ENCODE measurements at regions of chr6 and their contacts with region 1.

Region 1: GRCh38 chr6:81752138-81752920 is at the start of gene TENT5A:
- DNase-seq: peak; percentile 75
- ATAC-seq: peak; percentile 79
- H3K4me3 ChIP-seq: peak within 1 kb of the TSS; percentile 84 to 87
- H3K27ac ChIP-seq: peak within 1 kb of the TSS; percentile 82
- H3K4me1 ChIP-seq: peaks cover 4 to 24% of the 10 kb centered on the region in 2 experiments; a peak in 2 of 4 replicates
- H3K27me3 ChIP-seq: no peaks in the 10 kb centered on the region
- CTCF ChIP-seq: no peak
- POLR2A ChIP-seq: peak; percentile 45
- RAD21 ChIP-seq: peak; percentile 2
- total RNA-seq, gene TENT5A: 11.2 TPM

Region 2: DNA sequence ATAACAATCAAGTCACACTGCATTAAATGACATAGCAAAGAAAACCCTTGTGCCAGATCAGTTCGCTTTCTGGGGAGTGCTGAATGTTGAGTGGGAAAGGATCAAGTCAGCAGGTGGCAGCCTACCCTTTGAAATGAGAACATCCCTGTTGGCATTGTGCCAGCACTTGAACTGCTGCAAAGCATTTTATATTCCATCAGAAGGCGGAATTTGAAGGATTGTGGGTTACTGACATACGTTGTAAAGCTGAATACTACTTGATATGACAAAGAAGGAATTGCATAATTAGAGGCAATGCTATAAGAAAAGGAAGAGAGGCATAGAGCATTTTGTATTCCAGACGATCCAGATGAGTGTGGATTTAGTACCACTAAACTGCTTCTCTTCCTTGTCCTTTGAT is 1619.3 kb before region 1 on chr6:
- CTCF ChIA-PET with region 1: no interaction called
- POLR2A ChIA-PET with region 1: no interaction called
- RAD21 ChIA-PET with region 1: no interaction called
- intact Hi-C with region 1: loop called (anchors 5 kb)
- DNase-seq: peak; percentile 47
- ATAC-seq: peak; percentile 51; the same call in 1 of the 2 replicates
- H3K4me3 ChIP-seq: no peak overlapping the region
- H3K27ac ChIP-seq: no peak overlapping the region
- H3K4me1 ChIP-seq: peaks cover 6 to 9% of the 10 kb centered on the region in 2 experiments
- H3K27me3 ChIP-seq: no peaks in the 10 kb centered on the region
- CTCF ChIP-seq: peak; percentile 28 to 64 (median 54); a peak in 4 of 6 replicates
- POLR2A ChIP-seq: no peak
- RAD21 ChIP-seq: peak; percentile 84

Region 3: DNA sequence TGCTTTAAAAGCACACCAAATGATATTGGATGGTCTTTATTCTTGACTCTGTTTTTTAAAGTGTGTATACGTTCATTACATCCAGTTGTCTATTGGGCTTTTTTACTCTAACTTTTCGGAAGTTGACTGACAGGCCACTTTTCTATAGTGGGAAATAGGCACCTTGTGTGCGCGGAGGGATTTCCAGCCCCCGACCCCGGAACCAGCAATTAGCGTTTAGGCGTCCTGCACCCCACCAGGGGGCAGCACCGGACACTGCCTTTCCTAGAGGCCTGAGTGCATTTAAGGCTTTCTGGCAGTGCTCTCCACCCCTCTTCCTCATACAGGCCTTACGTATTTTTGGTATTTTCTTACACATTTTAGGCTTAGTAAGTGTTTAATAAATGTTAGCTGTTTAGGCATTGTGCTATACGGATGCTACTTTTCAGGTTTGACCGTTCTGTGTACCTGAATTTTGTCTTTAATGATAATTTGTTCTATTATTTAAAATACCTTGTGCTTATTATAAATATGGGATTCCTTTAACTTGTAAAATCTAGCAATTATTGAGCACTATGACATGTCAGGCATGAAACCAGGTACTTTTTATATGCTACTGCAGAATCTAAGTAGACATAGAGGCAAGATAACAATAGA is 1414.0 kb before region 1 on chr6:
- CTCF ChIA-PET with region 1: no interaction called
- POLR2A ChIA-PET with region 1: no interaction called
- RAD21 ChIA-PET with region 1: no interaction called
- intact Hi-C with region 1: loop called (anchors 5 kb)
- DNase-seq: peak; percentile 34
- ATAC-seq: peak; percentile 90
- H3K4me3 ChIP-seq: no peak overlapping the region
- H3K27ac ChIP-seq: no peak overlapping the region
- H3K4me1 ChIP-seq: no peaks in the 10 kb centered on the region
- H3K27me3 ChIP-seq: no peaks in the 10 kb centered on the region
- CTCF ChIP-seq: peak; percentile 43 to 89 (median 87); a peak in 5 of 6 replicates
- POLR2A ChIP-seq: no peak
- RAD21 ChIP-seq: peak; percentile 66

Region 4: GRCh38 chr6:80502871-80503270 is 1249.5 kb before region 1 on chr6:
- CTCF ChIA-PET with region 1: no interaction called
- POLR2A ChIA-PET with region 1: no interaction called
- RAD21 ChIA-PET with region 1: no interaction called
- intact Hi-C with region 1: no loop called
- DNase-seq: no peak
- ATAC-seq: no peak
- H3K4me3 ChIP-seq: no peak overlapping the region
- H3K27ac ChIP-seq: no peak overlapping the region
- H3K4me1 ChIP-seq: no peaks in the 10 kb centered on the region
- H3K27me3 ChIP-seq: no peaks in the 10 kb centered on the region
- CTCF ChIP-seq: no peak
- POLR2A ChIP-seq: no peak
- RAD21 ChIP-seq: no peak

Region 5: DNA sequence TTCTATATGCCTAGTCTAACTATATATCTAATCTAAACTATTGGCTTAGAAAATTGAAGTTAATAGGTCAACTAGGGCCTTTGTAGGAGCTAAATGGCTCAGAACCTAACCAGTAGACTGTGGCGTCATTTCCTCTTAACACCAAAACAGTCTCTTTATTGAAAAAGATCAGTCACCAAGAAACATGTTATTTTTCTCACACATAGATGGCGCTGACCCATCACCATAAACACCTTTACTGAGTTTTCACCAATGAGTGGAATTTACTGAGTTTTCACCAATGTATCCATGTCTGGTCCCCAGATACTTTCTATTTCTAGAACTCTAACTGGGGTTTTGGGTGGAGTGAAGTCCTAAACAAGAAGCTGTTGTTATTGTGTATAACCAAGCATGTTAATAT is 1009.8 kb before region 1 on chr6:
- CTCF ChIA-PET with region 1: no interaction called
- POLR2A ChIA-PET with region 1: no interaction called
- RAD21 ChIA-PET with region 1: no interaction called
- intact Hi-C with region 1: loop called (anchors 2 kb)
- DNase-seq: peak; percentile 35
- ATAC-seq: peak; percentile 71
- H3K4me3 ChIP-seq: no peak overlapping the region
- H3K27ac ChIP-seq: no peak overlapping the region
- H3K4me1 ChIP-seq: no peaks in the 10 kb centered on the region
- H3K27me3 ChIP-seq: no peaks in the 10 kb centered on the region
- CTCF ChIP-seq: peak; percentile 30 to 63 (median 46); a peak in 5 of 6 replicates
- POLR2A ChIP-seq: no peak
- RAD21 ChIP-seq: peak; percentile 74

Region 6: GRCh38 chr6:81241126-81242041 is 510.9 kb before region 1 on chr6:
- CTCF ChIA-PET with region 1: interaction called, 6 read pairs
- POLR2A ChIA-PET with region 1: no interaction called
- RAD21 ChIA-PET with region 1: interaction called in 1 of 2 experiments, 3 read pairs
- intact Hi-C with region 1: loop called (anchors 5 kb)
- DNase-seq: peak; percentile 27
- ATAC-seq: no peak
- H3K4me3 ChIP-seq: no peak overlapping the region
- H3K27ac ChIP-seq: no peak overlapping the region
- H3K4me1 ChIP-seq: no peaks in the 10 kb centered on the region
- H3K27me3 ChIP-seq: no peaks in the 10 kb centered on the region
- CTCF ChIP-seq: peak; percentile 37 to 56 (median 54); a peak in 5 of 6 replicates
- POLR2A ChIP-seq: no peak
- RAD21 ChIP-seq: peak; percentile 66

Region 7: GRCh38 chr6:81465859-81466258 is 286.5 kb before region 1 on chr6:
- CTCF ChIA-PET with region 1: no interaction called
- POLR2A ChIA-PET with region 1: no interaction called
- RAD21 ChIA-PET with region 1: no interaction called
- intact Hi-C with region 1: loop called (anchors 5 kb)
- DNase-seq: peak; percentile 37
- ATAC-seq: peak; percentile 50
- H3K4me3 ChIP-seq: no peak overlapping the region
- H3K27ac ChIP-seq: no peak overlapping the region
- H3K4me1 ChIP-seq: no peaks in the 10 kb centered on the region
- H3K27me3 ChIP-seq: no peaks in the 10 kb centered on the region
- CTCF ChIP-seq: peak; percentile 60 to 72 (median 68); a peak in 5 of 6 replicates
- POLR2A ChIP-seq: no peak
- RAD21 ChIP-seq: peak; percentile 66

Measured in HCT116 (cell line).